Transverse colon (tissue), 4 donors: ENCODE measurements at regions of chr3 and their contacts with region 1.

Region 1: DNA sequence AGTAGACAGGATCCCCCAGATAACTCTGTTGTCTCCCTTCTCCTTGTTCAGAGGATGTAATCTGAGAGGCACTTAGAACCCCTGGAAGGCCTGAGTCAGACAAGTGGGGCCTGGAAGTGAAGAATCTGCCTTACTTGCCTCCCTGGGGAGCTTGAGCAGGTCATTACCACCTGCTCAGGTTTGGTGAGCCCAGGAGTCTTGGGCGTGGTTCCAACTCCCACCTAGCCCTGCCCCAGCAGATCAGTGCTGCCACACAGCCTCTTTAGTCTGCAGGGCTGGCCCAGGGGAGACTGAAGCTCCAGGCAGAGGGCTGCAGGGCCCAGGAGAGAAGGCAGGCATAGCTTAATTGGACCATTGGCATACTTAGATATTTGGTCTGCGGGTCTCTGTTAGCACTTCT is 230.0 kb downstream of the ERC2 start:
- DNase-seq: no peak
- H3K4me3 ChIP-seq: no peak overlapping the region
- H3K27ac ChIP-seq: no peak overlapping the region
- H3K4me1 ChIP-seq: no peaks in the 10 kb centered on the region
- H3K27me3 ChIP-seq: no peaks in the 10 kb centered on the region
- CTCF ChIP-seq: no peak
- EP300 ChIP-seq: no peak
- POLR2A ChIP-seq: no peak

Region 2: GRCh38 chr3:55813268-55814097 is 424.8 kb before region 1 on chr3:
- in situ Hi-C with region 1: no loop called
- intact Hi-C with region 1: no loop called
- DNase-seq: no peak
- H3K4me3 ChIP-seq: no peak overlapping the region
- H3K27ac ChIP-seq: no peak overlapping the region
- H3K4me1 ChIP-seq: no peaks in the 10 kb centered on the region
- H3K27me3 ChIP-seq: no peaks in the 10 kb centered on the region
- CTCF ChIP-seq: no peak
- EP300 ChIP-seq: no peak
- POLR2A ChIP-seq: no peak

Region 3: DNA sequence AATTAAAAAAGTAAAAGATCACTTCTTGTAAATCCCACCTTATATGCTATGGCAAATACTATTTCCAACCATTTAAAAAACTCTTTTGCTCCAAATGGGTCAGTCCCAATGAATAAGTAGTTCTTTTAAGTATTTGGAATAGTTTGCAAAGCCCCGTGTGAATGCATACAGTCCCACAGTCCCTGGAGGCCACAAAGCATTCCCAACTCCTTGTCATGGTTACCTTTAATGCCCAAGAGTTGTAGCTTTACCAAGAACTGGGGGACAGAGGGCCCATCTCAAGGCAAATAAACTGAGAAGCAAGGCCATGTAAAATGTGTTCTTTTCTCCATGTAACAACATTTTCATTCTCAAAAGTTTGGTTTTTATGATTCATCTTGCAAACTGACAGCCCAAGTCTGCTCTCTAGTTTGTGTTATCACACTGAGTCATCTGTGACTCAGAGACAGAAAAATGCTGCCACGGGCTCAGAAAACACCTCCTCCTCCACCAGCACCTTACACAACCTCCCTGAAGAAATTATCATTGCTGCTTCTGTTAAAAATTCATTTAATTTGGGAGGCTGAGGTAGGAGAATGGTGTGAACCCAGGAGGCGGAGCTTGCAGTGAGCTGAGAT is 106.2 kb before region 1 on chr3:
- in situ Hi-C with region 1: loop called in 1 of 4 experiments (anchors 25 kb)
- intact Hi-C with region 1: no loop called
- DNase-seq: no peak
- H3K4me3 ChIP-seq: no peak overlapping the region
- H3K27ac ChIP-seq: no peak overlapping the region
- H3K4me1 ChIP-seq: no peaks in the 10 kb centered on the region
- H3K27me3 ChIP-seq: no peaks in the 10 kb centered on the region
- CTCF ChIP-seq: no peak
- EP300 ChIP-seq: no peak
- POLR2A ChIP-seq: no peak